ENCODE measurements at regions of chr2 and their contacts with region 1.

Region 1: DNA sequence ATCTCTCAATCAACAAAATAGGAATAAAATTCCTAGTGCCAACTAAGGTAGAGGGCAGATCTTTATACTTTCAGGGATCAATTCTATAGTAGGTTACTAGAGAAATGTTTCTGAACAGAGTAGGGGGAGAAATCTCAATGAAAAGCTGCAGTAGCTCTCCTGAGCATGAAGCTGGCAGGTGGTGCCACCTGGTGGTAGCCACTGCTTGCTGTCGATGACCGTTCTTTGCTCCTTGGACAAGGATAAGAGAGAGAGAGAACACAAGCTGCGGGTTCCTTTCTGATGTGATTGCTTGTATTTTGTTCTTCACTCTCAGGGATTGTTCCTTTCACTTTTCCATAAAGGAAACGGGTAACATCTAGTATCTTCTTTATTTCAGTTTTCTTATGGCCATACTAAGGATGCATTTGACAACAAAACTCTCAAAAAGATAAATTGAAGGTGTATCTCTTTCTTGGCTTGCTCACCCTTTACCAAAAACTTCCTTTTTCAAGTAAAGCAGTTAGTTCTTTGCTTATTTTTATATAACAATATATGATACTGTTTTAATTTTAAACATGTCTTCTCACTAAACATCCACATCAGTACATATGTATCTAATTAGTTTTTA is 18.6 kb upstream of the MRPL19 start:
- DNase-seq: peak; percentile 83
- H3K4me3 ChIP-seq: no peak overlapping the region
- H3K27ac ChIP-seq: no peak overlapping the region
- H3K4me1 ChIP-seq: peaks cover 8% of the 10 kb centered on the region
- H3K27me3 ChIP-seq: no peaks in the 10 kb centered on the region
- CTCF ChIP-seq: peak; percentile 95

Region 2: DNA sequence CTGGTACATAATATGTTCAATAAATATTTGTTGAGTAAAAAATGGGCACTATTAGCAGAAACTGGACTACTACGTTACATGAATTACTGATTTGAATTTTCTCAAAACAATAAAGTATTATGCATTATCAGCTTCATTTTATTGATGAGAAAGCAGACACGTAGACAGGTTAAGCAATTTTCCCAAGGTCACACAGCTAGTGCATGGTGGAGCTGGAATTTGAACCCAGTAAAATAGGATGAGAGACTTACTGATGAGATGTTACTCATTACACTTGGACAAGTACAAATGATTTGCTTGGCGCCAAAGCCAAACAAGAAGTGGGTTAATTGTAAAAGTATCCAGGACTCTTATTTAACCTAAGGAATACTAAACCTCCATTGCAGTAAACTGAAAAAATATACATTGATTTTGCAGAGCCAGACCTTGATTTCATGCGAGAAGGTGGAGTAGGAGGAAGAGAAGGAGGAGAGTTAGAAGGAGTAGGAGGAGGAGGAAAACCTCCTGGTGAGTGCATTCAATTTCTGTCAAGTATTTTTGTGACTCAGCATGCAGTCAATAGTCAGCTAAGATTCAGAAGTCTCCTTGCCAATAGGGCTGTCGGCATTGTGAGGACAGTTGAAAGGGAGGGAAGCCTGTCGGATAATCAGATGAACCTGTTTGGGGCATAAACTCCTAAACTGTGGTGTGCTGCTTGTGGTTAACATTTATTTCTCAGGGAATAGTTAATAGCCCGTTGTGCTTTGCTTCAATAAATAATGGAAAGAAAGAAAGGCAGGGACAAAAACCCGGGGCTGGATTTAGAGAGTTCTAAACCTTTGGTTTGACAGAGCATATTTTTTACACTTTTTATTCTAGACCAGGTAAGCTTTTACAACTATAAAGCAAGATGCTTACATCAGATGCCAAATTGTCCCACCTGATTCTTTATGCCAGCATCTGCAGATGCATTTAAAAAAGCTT is 351.6 kb before region 1 on chr2:
- CTCF ChIA-PET with region 1: no interaction called
- POLR2A ChIA-PET with region 1: no interaction called
- intact Hi-C with region 1: loop called (anchors 10 kb)
- DNase-seq: peak; percentile 97
- H3K4me3 ChIP-seq: peak overlapping the region; percentile 13
- H3K27ac ChIP-seq: peak overlapping the region; percentile 76
- H3K4me1 ChIP-seq: peaks cover 35% of the 10 kb centered on the region
- H3K27me3 ChIP-seq: no peaks in the 10 kb centered on the region
- CTCF ChIP-seq: no peak

Region 3: DNA sequence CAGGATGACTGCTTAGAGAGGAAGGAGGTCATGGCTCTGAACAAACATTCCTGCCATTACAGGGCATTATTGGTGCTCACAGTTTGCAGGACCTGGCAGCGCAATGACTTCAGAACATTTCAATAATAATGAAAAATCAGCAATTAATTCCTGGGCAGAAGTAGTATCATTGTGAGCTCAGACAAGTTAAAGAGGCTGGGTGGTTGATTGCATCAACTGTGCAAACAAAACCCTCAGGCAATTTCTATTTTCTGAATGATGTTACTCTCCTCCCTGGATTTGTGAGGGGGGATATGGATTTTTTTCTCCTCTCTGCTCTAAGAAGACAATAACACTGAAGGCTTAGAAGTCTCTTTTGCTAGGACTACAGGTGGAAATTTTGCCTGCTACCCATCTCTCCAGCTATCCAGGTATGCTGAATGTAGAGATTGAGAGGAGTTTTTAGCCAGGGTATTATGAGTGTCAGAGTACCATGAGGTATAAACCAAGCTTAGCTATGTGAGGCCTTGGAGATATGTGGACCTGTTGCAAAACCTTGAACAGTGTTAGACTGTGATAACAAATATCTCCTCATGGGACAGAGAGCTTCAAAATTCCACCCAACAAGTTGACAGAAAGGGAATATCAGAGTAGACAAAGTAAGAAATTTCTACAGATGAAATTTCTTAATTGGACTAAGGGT is 260.5 kb before region 1 on chr2:
- CTCF ChIA-PET with region 1: no interaction called
- POLR2A ChIA-PET with region 1: no interaction called
- intact Hi-C with region 1: no loop called
- DNase-seq: no peak
- H3K4me3 ChIP-seq: no peak overlapping the region
- H3K27ac ChIP-seq: no peak overlapping the region
- H3K4me1 ChIP-seq: no peaks in the 10 kb centered on the region
- H3K27me3 ChIP-seq: no peaks in the 10 kb centered on the region
- CTCF ChIP-seq: no peak

Region 4: DNA sequence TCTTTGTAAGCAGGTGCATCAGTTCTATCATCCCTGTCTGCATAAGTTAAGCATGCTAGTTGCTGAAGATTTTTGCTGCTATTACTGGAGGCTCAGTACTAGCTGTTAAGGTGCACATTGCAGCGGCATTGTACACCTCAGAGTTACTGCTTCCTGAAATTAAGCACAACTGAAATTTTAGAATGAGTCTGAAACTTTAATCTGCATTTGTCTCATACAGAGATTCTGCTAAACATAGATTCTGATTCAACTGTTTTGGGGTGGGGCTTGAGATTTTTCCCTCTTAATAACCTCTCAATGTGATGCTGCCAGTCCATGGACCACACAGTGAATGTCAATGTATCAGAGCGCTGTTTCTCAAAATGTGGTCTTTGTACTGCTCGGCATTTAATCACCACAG is 668.4 kb after region 1 on chr2:
- CTCF ChIA-PET with region 1: no interaction called
- POLR2A ChIA-PET with region 1: no interaction called
- intact Hi-C with region 1: no loop called
- DNase-seq: no peak
- H3K4me3 ChIP-seq: no peak overlapping the region
- H3K27ac ChIP-seq: no peak overlapping the region
- H3K4me1 ChIP-seq: peaks cover 4% of the 10 kb centered on the region
- H3K27me3 ChIP-seq: no peaks in the 10 kb centered on the region
- CTCF ChIP-seq: no peak